CD4-positive, alpha-beta T cell (primary cell): ENCODE measurements at regions of chr3 and their contacts with region 1.

Region 1: DNA sequence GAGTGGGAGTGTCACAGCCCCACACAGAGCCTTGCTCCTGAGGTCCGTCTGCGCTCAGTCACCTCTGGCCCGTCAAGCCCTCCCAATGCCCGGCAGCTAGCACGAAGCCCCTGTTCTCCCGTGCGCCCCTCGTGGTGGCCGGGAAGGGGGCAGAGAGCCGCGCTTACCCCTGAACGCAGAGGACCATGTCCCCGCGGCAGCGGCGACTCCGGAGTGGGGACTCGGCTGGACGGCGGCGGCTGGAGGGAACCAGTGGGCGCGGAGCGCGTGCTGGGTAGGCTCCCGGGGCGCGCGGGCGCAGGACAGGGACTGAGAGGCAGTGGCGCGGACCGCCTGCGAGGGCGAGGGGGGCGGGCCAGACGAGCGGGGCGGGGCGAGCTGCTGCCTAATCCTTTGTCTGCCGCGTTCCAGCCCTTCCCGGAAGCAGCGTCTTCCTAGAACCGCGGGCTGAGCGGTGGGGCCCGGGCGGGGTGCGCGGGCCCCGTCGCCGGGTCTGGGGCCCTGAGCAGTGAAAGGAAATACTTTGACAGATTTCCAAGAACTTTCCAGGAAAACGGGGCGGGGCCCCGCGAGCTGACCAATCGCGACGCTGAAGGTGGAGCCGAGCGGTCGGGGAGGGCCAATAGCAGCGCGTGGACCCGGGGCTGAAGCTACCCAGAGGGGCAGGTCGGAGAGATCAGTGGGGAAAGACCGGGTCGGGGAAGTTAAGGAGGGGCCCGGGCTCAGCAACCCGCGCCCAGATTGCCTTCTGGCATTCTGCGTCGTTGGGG is at the start of gene CISH:
- DNase-seq: peak; percentile 83 to 97 (median 90)
- ATAC-seq: peak; percentile 68
- H3K4me3 ChIP-seq: peak within 1 kb of the TSS; percentile 87
- H3K4me3 Mint-ChIP-seq: peak within 1 kb of the TSS; percentile 96
- H3K27ac ChIP-seq: peak within 1 kb of the TSS; percentile 79 to 89
- H3K27ac Mint-ChIP-seq: peak within 1 kb of the TSS; percentile 93
- H3K4me1 ChIP-seq: peaks cover 88% of the 10 kb centered on the region
- H3K4me1 Mint-ChIP-seq: peaks cover 77% of the 10 kb centered on the region
- H3K27me3 ChIP-seq: no peaks in the 10 kb centered on the region
- H3K27me3 Mint-ChIP-seq: no peaks in the 10 kb centered on the region
- CTCF ChIP-seq: peak; percentile 34
- total RNA-seq, gene CISH: 3.5 to 3.7 TPM

Region 2: GRCh38 chr3:50365080-50365841 is 246.4 kb before region 1 on chr3:
- CTCF ChIA-PET with region 1: no interaction called
- POLR2A ChIA-PET with region 1: interaction called, 4 read pairs
- intact Hi-C with region 1: loop called in 1 of 2 experiments (anchors 2 kb)
- DNase-seq: peak; percentile 92 to 97 (median 95)
- ATAC-seq: peak; percentile 95
- H3K4me3 ChIP-seq: peak overlapping the region; percentile 73
- H3K4me3 Mint-ChIP-seq: peak overlapping the region; percentile 94
- H3K27ac ChIP-seq: peak overlapping the region; percentile 69 to 81
- H3K27ac Mint-ChIP-seq: peak overlapping the region; percentile 98
- H3K4me1 ChIP-seq: peaks cover 30% of the 10 kb centered on the region
- H3K4me1 Mint-ChIP-seq: peaks cover 25% of the 10 kb centered on the region
- H3K27me3 ChIP-seq: no peaks in the 10 kb centered on the region
- H3K27me3 Mint-ChIP-seq: no peaks in the 10 kb centered on the region
- CTCF ChIP-seq: no peak

Region 3: DNA sequence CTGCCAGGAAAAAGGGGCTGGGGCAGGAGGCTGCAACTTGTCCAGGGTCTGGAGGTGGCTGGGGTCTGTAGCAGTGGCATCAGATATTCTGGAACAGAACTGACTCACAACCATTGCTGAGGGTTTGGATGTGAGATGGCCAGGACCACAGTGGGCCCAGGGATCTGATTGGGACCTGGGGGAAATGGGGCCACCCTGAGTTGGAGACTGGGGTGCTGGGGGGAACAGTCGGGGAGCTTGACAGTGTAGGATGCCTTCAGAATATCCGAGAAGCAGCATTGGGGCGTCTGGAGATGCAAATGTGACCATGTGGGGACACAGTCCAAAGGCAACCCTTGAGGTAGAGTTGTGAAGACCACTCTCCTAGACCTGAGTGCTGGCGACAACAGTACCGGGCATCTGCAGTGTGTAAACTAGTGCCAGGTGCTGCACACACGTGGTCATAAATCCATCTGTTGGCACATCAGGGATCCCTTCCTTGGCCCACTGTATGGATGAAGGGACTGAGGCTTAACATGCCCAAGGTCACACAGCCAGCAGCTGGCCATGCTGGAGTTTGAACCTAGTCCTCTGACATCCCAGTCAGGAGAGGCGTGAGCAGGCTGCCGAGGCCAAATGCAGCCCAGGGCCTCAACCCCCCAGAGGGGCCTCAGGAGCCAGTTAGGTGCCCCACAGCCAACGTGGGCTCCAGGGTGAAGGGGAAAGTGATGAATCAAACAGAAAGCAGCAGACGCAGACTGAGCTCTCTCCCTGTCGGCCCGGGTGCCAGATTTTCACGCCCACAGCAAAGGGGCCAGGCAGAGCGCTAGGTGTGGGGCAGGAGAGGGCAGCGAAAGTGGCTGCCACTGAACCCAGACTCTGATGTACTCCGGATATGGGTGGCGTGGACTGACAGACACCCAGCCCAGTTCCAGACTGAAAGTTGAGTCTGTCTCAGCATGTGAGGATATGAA is 23.6 kb before region 1 on chr3:
- CTCF ChIA-PET with region 1: interaction called, 114 read pairs
- POLR2A ChIA-PET with region 1: interaction called, 86 read pairs
- intact Hi-C with region 1: loop called (anchors 1 to 2 kb)
- DNase-seq: peak in 6 of 14 experiments; percentile 45 to 75 (median 55)
- ATAC-seq: peak; percentile 45
- H3K4me3 ChIP-seq: no peak overlapping the region
- H3K4me3 Mint-ChIP-seq: peak overlapping the region; percentile 42
- H3K27ac ChIP-seq: peak overlapping the region in 1 of 2 donors; percentile 58
- H3K27ac Mint-ChIP-seq: peak overlapping the region; percentile 86
- H3K4me1 ChIP-seq: peaks cover 88% of the 10 kb centered on the region
- H3K4me1 Mint-ChIP-seq: peaks cover 49% of the 10 kb centered on the region
- H3K27me3 ChIP-seq: no peaks in the 10 kb centered on the region
- H3K27me3 Mint-ChIP-seq: no peaks in the 10 kb centered on the region
- CTCF ChIP-seq: no peak

Region 4: GRCh38 chr3:50674349-50675178 is 62.9 kb after region 1 on chr3 and contains the start of gene DOCK3:
- CTCF ChIA-PET with region 1: interaction called, 4 read pairs
- POLR2A ChIA-PET with region 1: no interaction called
- intact Hi-C with region 1: loop called in 1 of 2 experiments (anchors 2 kb)
- DNase-seq: peak; percentile 24 to 89 (median 58)
- ATAC-seq: peak; percentile 91
- H3K4me3 ChIP-seq: peak within 1 kb of the TSS; percentile 53
- H3K4me3 Mint-ChIP-seq: peak within 1 kb of the TSS; percentile 87
- H3K27ac ChIP-seq: no peak within 1 kb of the TSS
- H3K27ac Mint-ChIP-seq: no peak within 1 kb of the TSS
- H3K4me1 ChIP-seq: peaks cover 8% of the 10 kb centered on the region
- H3K4me1 Mint-ChIP-seq: peaks cover 6% of the 10 kb centered on the region
- H3K27me3 ChIP-seq: peaks cover 5 to 17% of the 10 kb centered on the region in 2 experiments
- H3K27me3 Mint-ChIP-seq: peaks cover 49% of the 10 kb centered on the region
- CTCF ChIP-seq: no peak
- total RNA-seq, gene DOCK3: 0.93 to 1.1 TPM

Region 5: DNA sequence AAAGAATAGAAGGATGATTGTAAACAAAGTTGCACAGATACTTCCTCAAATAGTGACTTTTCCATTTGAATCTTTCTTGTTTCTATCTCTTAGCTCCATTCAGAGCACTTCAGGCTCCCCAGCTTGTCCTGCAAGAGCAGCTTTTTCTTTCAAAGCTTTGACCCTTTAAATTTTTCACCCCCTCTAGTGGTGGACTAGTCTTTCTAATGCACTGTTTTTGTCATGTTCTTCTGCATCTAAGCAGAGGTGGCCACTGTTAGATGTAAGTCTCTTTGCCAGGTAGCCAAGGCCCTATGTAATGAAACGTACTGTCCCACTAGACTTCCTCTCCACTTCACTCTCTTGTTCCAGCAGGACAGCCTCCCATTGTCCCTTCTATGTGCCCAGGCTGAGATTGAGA is 699.4 kb after region 1 on chr3:
- CTCF ChIA-PET with region 1: interaction called, 8 read pairs
- POLR2A ChIA-PET with region 1: no interaction called
- intact Hi-C with region 1: loop called (anchors 2 kb)
- DNase-seq: peak in 4 of 14 experiments; percentile 3 to 53 (median 47)
- ATAC-seq: no peak
- H3K4me3 ChIP-seq: no peak overlapping the region
- H3K4me3 Mint-ChIP-seq: no peak overlapping the region
- H3K27ac ChIP-seq: no peak overlapping the region
- H3K27ac Mint-ChIP-seq: no peak overlapping the region
- H3K4me1 ChIP-seq: no peaks in the 10 kb centered on the region
- H3K4me1 Mint-ChIP-seq: no peaks in the 10 kb centered on the region
- H3K27me3 ChIP-seq: no peaks in the 10 kb centered on the region
- H3K27me3 Mint-ChIP-seq: peaks cover 5% of the 10 kb centered on the region
- CTCF ChIP-seq: peak; percentile 55

Region 6: DNA sequence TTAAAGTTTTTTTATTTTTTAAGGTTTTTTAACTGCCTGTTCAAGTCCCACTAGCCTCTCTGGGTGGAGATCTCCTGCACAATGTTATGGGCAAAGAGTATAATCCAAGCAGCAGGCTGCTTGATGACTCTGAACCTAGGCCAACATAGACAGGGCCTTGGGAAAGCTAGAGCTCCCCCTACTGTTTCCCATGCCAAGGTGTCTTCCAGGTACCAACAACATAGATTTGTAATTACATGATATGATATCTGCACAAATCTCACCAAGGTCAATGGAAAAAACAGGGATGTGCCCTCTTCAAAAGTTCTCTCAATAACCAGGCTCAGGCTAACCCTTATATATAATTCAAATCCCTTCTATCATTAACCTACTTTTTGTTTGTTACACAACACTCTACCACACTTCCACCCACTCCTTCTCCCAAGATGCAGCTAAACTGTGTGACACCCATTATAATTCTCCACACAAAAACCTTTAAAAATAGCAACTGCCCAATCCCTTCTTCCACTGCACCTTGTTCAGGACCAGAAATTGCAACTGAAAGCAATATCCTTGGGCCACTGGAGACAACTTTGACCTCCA is 823.2 kb after region 1 on chr3:
- CTCF ChIA-PET with region 1: interaction called, 11 read pairs
- POLR2A ChIA-PET with region 1: no interaction called
- intact Hi-C with region 1: loop called in 1 of 2 experiments (anchors 2 kb)
- DNase-seq: peak in 13 of 14 experiments; percentile 13 to 77 (median 30)
- ATAC-seq: peak; percentile 94
- H3K4me3 ChIP-seq: no peak overlapping the region
- H3K4me3 Mint-ChIP-seq: no peak overlapping the region
- H3K27ac ChIP-seq: no peak overlapping the region
- H3K27ac Mint-ChIP-seq: no peak overlapping the region
- H3K4me1 ChIP-seq: no peaks in the 10 kb centered on the region
- H3K4me1 Mint-ChIP-seq: peaks cover 8% of the 10 kb centered on the region
- H3K27me3 ChIP-seq: no peaks in the 10 kb centered on the region
- H3K27me3 Mint-ChIP-seq: no peaks in the 10 kb centered on the region
- CTCF ChIP-seq: peak; percentile 83

Region 7: GRCh38 chr3:51799879-51800749 is 1188.5 kb after region 1 on chr3:
- CTCF ChIA-PET with region 1: interaction called, 3 read pairs
- POLR2A ChIA-PET with region 1: no interaction called
- intact Hi-C with region 1: loop called in 1 of 2 experiments (anchors 5 kb)
- DNase-seq: peak in 5 of 14 experiments; percentile 9 to 69 (median 67)
- ATAC-seq: peak; percentile 54
- H3K4me3 ChIP-seq: no peak overlapping the region
- H3K4me3 Mint-ChIP-seq: no peak overlapping the region
- H3K27ac ChIP-seq: no peak overlapping the region
- H3K27ac Mint-ChIP-seq: no peak overlapping the region
- H3K4me1 ChIP-seq: peaks cover 2% of the 10 kb centered on the region
- H3K4me1 Mint-ChIP-seq: peaks cover 10% of the 10 kb centered on the region
- H3K27me3 ChIP-seq: no peaks in the 10 kb centered on the region
- H3K27me3 Mint-ChIP-seq: peaks cover 11% of the 10 kb centered on the region
- CTCF ChIP-seq: peak; percentile 77